HEK293T (cell line): ENCODE measurements at regions of chr12 and their contacts with region 1.

Region 1: DNA sequence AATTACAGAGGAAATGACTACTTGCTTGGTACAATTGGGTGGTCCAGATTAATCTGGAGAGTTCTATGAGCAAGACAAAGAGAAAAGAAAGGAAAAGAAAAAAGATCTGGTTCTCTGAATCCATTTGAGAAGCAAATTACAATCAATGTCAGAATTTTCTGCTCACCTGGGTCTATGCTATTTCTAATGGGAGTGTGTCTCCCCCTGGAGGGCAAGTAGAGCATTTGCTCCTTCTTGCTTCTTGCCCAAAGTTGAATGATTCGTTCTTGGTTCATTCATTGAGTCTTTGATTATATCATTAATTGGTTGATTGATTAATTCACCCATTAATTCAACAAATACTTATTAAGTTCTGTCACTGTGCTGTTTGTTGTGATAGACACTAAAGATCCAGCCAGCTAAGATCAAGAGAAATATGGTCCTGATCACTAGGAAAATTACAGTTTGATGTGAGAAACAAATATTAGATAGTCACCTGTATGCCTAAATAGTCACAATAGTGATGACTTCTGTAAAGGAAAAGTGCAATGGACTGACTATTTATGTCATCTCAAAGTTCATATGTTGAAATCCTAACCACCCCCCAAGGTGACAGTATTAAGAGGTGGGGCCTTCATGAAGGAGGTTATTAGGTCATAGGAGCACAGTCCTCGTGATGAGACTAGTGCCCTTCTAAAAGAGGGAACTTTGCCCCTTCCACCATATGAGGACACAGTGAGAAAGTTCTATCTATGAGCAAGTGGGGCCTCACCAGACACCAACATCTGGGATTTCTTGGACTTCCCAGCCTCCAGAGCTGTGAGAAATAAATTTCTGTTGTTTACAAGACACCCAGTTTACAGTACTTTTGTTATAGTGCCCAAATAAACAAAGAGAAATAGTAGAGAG is 8.0 kb upstream of the ASB8 start:
- DNase-seq: peak; percentile 56

Region 2: GRCh38 chr12:48084066-48084465 is 81.3 kb before region 1 on chr12:
- CTCF ChIA-PET with region 1: interaction called, 11 read pairs
- POLR2A ChIA-PET with region 1: no interaction called
- DNase-seq: no peak